ENCODE measurements at regions of chr19 and their contacts with region 1.

Region 1: GRCh38 chr19:6862673-6863078 is 24.7 kb upstream of the ADGRE1 start:
- DNase-seq: peak; percentile 96
- ATAC-seq: peak; percentile 83
- H3K4me3 Mint-ChIP-seq: peak overlapping the region; percentile 72
- H3K27ac Mint-ChIP-seq: peak overlapping the region; percentile 89
- H3K4me1 Mint-ChIP-seq: peaks cover 14% of the 10 kb centered on the region
- H3K27me3 Mint-ChIP-seq: no peaks in the 10 kb centered on the region

Region 2: DNA sequence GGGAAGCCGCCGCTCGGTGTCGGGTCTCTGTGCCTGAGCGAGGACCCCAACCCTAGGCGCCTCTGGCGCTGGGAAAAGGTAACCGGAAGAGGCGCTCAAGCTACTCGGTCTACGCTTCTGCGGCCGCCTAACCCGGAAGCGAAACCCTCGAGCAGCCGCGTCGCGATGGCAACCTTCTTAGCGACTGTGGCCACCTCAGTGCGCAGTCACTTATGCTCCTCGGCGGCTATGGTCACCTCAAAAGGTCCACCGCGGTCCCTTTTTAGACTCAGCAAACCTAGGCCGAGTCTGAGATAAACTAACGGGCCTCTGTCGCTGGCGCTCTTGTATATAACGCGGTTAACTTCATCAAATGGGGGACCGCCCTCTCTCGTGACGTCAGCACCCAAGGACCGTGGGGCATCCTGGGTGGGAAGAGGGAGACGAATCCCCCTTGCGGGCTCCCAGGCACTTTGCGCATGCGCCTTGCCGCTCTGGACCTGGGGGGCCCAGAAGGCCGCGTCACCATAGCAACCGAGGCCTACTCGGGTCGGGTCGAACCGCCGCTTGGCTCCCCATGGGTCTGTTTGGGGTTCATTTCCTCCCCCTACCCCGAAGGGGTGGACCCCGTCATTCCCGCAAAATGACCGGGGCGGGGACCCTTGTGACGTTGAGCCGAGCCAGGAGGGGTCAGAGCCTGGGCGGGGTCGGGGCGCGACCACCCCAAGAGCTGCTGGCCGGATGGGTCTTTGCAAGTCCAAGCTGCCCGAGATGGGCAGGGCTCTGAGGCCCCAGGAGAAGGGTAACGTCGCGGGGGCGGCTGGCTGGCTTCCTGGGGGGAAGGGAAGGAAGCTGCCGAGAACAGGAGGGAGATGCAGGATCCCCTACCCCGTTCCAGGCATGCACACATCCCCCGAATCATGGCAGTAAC is 469.3 kb before region 1 on chr19 and contains the start of gene GTF2F1:
- CTCF ChIA-PET with region 1: no interaction called
- POLR2A ChIA-PET with region 1: no interaction called
- intact Hi-C with region 1: loop called in 1 of 2 experiments (anchors 1 kb)
- DNase-seq: peak; percentile 96
- ATAC-seq: peak; percentile 89
- H3K4me3 Mint-ChIP-seq: peak within 1 kb of the TSS; percentile 85
- H3K27ac Mint-ChIP-seq: peak within 1 kb of the TSS; percentile 91
- H3K4me1 Mint-ChIP-seq: peaks cover 22% of the 10 kb centered on the region
- H3K27me3 Mint-ChIP-seq: no peaks in the 10 kb centered on the region
- total RNA-seq, gene GTF2F1: 60.9 to 78.5 TPM

Region 3: DNA sequence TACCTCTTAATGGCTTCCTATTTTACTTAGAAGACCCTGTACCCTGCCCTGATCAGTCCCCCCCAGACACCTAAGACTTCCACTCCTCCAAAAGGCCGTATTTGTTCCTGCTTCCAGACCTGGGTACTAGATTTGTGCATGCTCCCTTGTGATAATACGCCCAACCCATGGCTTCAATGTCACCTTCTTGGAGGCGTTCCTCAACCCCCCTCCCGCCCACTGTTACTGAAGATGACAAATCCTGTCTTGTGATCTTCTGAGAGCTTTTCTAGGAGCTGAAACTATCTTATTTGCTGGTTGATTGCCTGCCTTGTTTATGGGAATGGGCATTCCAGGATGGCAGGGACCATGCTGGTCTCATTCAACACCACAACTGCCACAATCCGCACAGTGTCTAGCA is 412.5 kb before region 1 on chr19:
- CTCF ChIA-PET with region 1: no interaction called
- POLR2A ChIA-PET with region 1: no interaction called
- intact Hi-C with region 1: no loop called
- DNase-seq: no peak
- ATAC-seq: no peak
- H3K4me3 Mint-ChIP-seq: no peak overlapping the region
- H3K27ac Mint-ChIP-seq: no peak overlapping the region
- H3K4me1 Mint-ChIP-seq: no peaks in the 10 kb centered on the region
- H3K27me3 Mint-ChIP-seq: no peaks in the 10 kb centered on the region

Region 4: DNA sequence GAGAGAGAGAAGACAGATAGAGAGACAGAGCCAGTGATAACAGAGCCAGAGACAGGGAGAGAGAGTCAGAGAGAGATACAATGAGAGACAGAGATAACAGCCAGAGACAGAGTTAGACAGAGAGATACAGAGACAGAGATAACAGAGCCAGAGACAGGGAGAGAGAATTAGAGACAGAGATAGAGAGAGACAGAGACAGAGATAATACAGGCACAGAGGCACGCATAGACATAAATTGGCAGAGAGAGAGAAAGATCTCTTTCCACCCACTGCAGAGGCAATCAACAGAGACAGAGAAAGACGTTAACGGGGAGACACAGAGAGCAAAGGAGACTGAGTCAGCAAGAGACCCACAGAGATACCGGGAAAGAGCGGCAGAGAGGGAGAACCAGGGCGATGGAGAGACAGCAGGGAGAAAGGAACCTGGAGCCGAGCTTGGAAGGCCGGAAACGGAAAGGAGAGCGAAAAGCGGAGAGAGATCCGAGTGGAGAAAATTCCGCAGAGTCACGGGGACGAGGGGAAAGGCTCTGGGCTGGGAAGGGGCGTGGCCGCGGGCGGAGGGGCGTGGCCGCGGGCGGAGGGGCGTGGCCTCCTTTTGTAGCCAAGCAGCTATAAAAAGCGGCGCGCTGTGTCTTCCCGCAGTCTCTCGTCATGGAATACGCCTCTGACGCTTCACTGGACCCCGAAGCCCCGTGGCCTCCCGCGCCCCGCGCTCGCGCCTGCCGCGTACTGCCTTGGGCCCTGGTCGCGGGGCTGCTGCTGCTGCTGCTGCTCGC is 332.1 kb before region 1 on chr19 and contains the start of gene TNFSF9:
- CTCF ChIA-PET with region 1: interaction called, 3 read pairs
- POLR2A ChIA-PET with region 1: no interaction called
- intact Hi-C with region 1: loop called in 1 of 2 experiments (anchors 5 kb)
- DNase-seq: peak; percentile 90
- ATAC-seq: peak; percentile 73
- H3K4me3 Mint-ChIP-seq: peak within 1 kb of the TSS; percentile 77
- H3K27ac Mint-ChIP-seq: peak within 1 kb of the TSS; percentile 80
- H3K4me1 Mint-ChIP-seq: peaks cover 30% of the 10 kb centered on the region
- H3K27me3 Mint-ChIP-seq: peaks cover 36% of the 10 kb centered on the region
- total RNA-seq, gene TNFSF9: 0.49 to 0.57 TPM

Region 5: GRCh38 chr19:6639439-6639838 is 223.2 kb before region 1 on chr19:
- CTCF ChIA-PET with region 1: interaction called, 12 read pairs
- POLR2A ChIA-PET with region 1: no interaction called
- intact Hi-C with region 1: no loop called
- DNase-seq: peak; percentile 63
- ATAC-seq: peak; percentile 92
- H3K4me3 Mint-ChIP-seq: no peak overlapping the region
- H3K27ac Mint-ChIP-seq: no peak overlapping the region
- H3K4me1 Mint-ChIP-seq: peaks cover 33% of the 10 kb centered on the region
- H3K27me3 Mint-ChIP-seq: no peaks in the 10 kb centered on the region

Region 6: GRCh38 chr19:6767357-6768235 is 95.1 kb before region 1 on chr19 and contains the start of gene SH2D3A:
- CTCF ChIA-PET with region 1: interaction called, 7 read pairs
- POLR2A ChIA-PET with region 1: no interaction called
- intact Hi-C with region 1: loop called (anchors 1 kb)
- DNase-seq: peak; percentile 97
- ATAC-seq: peak; percentile 78
- H3K4me3 Mint-ChIP-seq: peak within 1 kb of the TSS; percentile 83
- H3K27ac Mint-ChIP-seq: peak within 1 kb of the TSS; percentile 94
- H3K4me1 Mint-ChIP-seq: peaks cover 42% of the 10 kb centered on the region
- H3K27me3 Mint-ChIP-seq: no peaks in the 10 kb centered on the region
- total RNA-seq, gene SH2D3A: 20.7 to 23.2 TPM

Region 7: GRCh38 chr19:7287722-7288500 is 425.2 kb after region 1 on chr19:
- CTCF ChIA-PET with region 1: no interaction called
- POLR2A ChIA-PET with region 1: no interaction called
- intact Hi-C with region 1: no loop called
- DNase-seq: no peak
- ATAC-seq: no peak
- H3K4me3 Mint-ChIP-seq: no peak overlapping the region
- H3K27ac Mint-ChIP-seq: no peak overlapping the region
- H3K4me1 Mint-ChIP-seq: no peaks in the 10 kb centered on the region
- H3K27me3 Mint-ChIP-seq: peaks cover 8% of the 10 kb centered on the region